ENCODE measurements at regions of chr5 and their contacts with region 1.

Region 1: DNA sequence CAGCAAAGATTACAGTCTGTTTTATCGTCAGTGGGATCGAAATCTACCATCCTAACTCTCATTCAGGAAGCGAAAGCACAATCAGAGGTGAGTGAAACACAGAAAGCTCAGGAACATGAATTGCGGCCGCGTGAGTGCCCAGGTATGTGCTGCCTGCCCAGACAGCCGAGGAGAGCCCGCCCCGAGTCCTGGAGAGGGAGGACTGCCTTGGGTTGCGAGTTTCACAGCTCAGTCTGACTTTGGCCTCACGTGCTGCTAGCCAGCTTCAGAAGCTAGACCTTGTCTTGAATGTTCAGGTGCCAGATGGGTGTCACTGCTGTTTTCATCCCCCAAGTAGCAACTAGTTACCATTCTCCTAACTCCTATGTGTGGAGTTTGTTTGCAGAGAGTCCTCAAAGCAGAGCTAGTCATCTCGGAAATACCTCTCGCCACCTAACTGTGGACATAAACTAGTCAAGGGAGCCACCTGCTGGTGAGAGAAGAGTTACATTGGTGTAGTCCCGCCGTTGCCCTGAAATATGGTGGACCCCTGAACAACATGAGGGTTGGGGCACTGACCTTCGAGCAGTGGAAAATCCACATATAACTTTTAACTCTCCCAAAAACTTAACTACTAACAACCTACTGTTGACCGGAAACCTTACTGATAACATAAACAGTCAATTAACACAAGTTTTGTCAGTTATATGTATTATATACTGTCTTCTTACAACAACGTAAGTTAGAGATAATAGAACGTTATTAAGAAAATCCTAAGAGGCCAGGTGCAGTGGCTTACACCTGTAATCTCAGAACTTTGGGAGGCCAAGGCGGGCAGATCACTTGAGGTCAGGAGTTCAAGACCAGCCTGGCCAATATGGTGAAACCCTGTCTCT is 80.9 kb downstream of the GOLPH3 start:
- DNase-seq: peak in 5 of 10 donors; percentile 46 to 74 (median 61)

Region 2: GRCh38 chr5:31581498-31582099 is 511.6 kb before region 1 on chr5:
- intact Hi-C with region 1: loop called (anchors 5 kb)
- DNase-seq: no peak

Region 3: GRCh38 chr5:31825518-31826068 is 267.6 kb before region 1 on chr5:
- intact Hi-C with region 1: loop called (anchors 1 kb)
- DNase-seq: peak in 5 of 10 donors; percentile 15 to 58 (median 41)

Measured in posterior cingulate gyrus (tissue), 11 donors.